Uterus (tissue), 4 donors: ENCODE measurements at regions of chr17 and their contacts with region 1.

Region 1: GRCh38 chr17:29148790-29149430 is 31.3 kb downstream of the MYO18A start:
- DNase-seq: peak; percentile 93 to 97
- H3K4me3 ChIP-seq: peak overlapping the region; percentile 37 to 39
- H3K27ac ChIP-seq: peak overlapping the region; percentile 85 to 86
- H3K4me1 ChIP-seq: peaks cover 0 to 3% of the 10 kb centered on the region in 2 donors
- H3K27me3 ChIP-seq: no peaks in the 10 kb centered on the region
- CTCF ChIP-seq: peak; percentile 97 to 99 (median 98)
- POLR2A ChIP-seq: peak; percentile 48 to 62

Region 2: DNA sequence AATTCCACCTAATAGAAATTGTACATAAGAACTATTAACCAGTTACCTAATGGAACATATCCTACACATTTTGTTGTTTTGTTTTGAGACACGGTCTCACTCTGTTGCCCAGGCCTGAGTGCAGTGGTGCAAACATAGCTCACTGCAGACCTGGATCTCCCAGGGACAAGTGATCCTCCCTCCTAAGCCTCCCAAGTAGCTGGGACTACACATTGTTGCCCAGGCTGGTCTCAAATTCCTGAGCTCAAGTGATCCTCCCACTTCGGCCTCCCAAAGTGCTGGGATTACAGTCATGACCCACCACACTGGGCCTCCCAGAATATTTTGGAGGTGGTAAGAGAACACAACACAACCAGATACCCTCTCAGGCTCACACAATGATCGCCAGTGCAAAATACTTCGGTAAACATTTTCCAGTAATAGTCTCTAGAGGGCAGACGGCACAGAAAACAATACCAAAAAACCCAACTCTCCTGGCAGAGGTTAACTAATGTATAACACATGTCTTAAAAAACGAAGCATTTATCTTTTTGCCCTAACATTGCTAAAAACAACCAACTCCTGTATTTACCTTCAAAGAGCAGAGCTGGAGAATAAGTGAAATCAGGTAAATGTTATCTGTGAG is 134.5 kb after region 1 on chr17:
- intact Hi-C with region 1: no loop called
- DNase-seq: no peak
- H3K4me3 ChIP-seq: no peak overlapping the region
- H3K27ac ChIP-seq: no peak overlapping the region
- H3K4me1 ChIP-seq: no peaks in the 10 kb centered on the region
- H3K27me3 ChIP-seq: no peaks in the 10 kb centered on the region
- CTCF ChIP-seq: no peak
- POLR2A ChIP-seq: no peak

Region 3: GRCh38 chr17:29293890-29294579 is 145.1 kb after region 1 on chr17 and contains the start of gene NUFIP2:
- intact Hi-C with region 1: loop called (anchors 10 kb)
- DNase-seq: peak; percentile 99
- H3K4me3 ChIP-seq: peak within 1 kb of the TSS; percentile 65 to 81
- H3K27ac ChIP-seq: peak within 1 kb of the TSS; percentile 92 to 96
- H3K4me1 ChIP-seq: peaks cover 9 to 11% of the 10 kb centered on the region in 2 donors
- H3K27me3 ChIP-seq: no peaks in the 10 kb centered on the region
- CTCF ChIP-seq: peak in 3 of 4 experiments; percentile 10 to 23 (median 19)
- POLR2A ChIP-seq: peak; percentile 99 to 100
- total RNA-seq, gene NUFIP2: 15.6 to 62.4 (median 38.7) TPM